SK-N-SH (cell line): ENCODE measurements at regions of chr12 and their contacts with region 1.

Region 1: DNA sequence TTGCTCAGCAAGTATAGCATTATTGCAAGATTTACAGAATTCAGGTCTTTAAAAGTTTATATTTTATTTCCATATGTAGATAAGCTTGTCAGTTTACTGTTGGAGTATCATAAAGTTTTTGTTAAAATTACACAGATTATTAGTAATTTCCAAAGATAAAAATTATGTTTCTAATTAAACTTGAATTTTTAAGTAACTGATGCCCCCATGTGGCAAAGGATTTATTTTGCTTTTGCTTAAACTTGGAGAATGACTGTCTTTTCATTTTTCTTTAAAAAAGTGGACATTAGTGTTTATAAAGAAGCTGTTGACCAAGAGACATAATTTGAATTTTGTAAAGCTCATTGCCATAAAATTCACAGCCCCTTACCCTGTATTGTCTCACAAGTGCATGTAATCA is 45.8 kb downstream of the ETNK1 start:
- DNase-seq: no peak
- H3K4me3 ChIP-seq: no peak overlapping the region
- H3K27ac ChIP-seq: no peak overlapping the region
- H3K4me1 ChIP-seq: peaks cover 0 to 5% of the 10 kb centered on the region in 2 experiments; a peak in 1 of 4 replicates
- H3K27me3 ChIP-seq: no peaks in the 10 kb centered on the region
- CTCF ChIP-seq: peak; percentile 63
- EP300 ChIP-seq: no peak
- RAD21 ChIP-seq: peak; percentile 43

Region 2: GRCh38 chr12:22598141-22598762 is 72.5 kb before region 1 on chr12:
- CTCF ChIA-PET with region 1: no interaction called
- POLR2A ChIA-PET with region 1: no interaction called
- DNase-seq: no peak
- H3K4me3 ChIP-seq: no peak overlapping the region
- H3K27ac ChIP-seq: no peak overlapping the region
- H3K4me1 ChIP-seq: no peaks in the 10 kb centered on the region
- H3K27me3 ChIP-seq: no peaks in the 10 kb centered on the region
- CTCF ChIP-seq: no peak
- EP300 ChIP-seq: no peak
- RAD21 ChIP-seq: no peak

Region 3: DNA sequence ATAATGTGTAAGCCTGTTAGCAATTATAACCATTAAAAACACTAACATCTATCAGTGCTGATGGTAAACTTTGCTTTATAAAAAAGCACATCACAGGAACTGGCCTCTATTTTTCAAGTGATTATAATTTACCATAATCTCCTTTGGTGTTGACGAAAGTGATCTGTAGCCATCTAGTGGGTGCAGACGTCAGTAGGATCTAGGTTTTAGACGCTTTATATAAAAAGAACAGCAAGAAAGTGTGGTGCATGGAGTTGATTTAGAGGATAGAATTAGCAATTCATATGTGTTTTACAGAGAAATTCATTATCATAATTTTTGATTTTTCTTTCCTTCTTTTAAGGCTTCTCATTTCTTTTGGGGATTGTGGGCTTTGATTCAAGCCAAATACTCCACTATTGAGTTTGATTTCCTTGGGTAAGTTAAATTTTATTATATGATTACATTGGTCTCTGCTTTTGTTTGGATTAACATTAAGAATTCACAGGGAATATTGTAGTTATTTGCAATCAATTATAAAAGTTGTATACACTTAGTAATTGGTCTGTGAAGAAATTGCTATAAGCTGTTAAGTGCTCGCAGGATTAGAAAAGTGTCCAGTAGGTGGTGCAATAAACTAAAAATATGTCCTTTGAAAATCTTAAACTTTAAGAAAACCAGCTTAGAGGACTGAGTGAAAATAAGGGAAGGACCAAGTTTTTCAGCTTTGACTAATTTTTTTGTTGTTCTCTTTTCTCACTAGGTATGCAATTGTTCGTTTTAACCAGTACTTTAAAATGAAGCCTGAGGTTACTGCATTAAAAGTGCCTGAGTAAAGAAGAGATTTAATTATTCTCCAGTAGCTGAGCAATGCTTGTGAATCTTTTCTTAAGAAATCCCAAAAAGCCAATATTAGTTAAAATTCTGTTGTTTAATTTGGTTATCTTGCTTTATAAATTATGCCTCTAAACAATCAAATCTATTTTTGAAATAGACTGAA is 13.7 kb after region 1 on chr12:
- CTCF ChIA-PET with region 1: interaction called, 19 read pairs
- POLR2A ChIA-PET with region 1: no interaction called
- DNase-seq: peak; percentile 10
- H3K4me3 ChIP-seq: no peak overlapping the region; a peak in 1 of 4 replicates
- H3K27ac ChIP-seq: no peak overlapping the region
- H3K4me1 ChIP-seq: peaks cover 0 to 6% of the 10 kb centered on the region in 2 experiments; a peak in 2 of 4 replicates
- H3K27me3 ChIP-seq: no peaks in the 10 kb centered on the region
- CTCF ChIP-seq: peak; percentile 82
- EP300 ChIP-seq: no peak
- RAD21 ChIP-seq: peak; percentile 60